Ovary (tissue), 10 donors: ENCODE measurements at regions of chrX and their contacts with region 1.

Region 1: GRCh38 chrX:108160309-108160708 is 68.7 kb downstream of the ATG4A start:
- DNase-seq: no peak
- H3K4me3 ChIP-seq: no peak overlapping the region
- H3K27ac ChIP-seq: no peak overlapping the region
- H3K4me1 ChIP-seq: no peaks in the 10 kb centered on the region
- H3K27me3 ChIP-seq: no peaks in the 10 kb centered on the region
- CTCF ChIP-seq: no peak
- EP300 ChIP-seq: no peak
- POLR2A ChIP-seq: no peak

Region 2: DNA sequence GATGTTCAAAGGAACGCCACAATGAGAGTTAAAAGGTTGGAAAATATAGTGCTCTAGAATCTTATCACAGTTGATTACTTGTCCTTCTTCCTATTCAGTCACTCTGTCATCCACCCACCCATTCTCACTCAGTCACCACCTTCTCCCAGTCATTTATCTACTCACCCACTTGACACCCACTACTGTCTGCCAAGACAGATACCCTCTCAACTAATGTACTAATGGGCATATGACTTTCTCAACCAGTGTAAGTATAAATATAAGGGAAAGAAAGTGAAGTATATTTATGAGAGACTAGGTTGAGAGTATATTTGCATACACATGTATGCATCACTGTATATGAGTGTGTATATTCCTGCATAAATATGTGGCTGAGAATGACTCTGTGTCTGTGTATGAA is 314.7 kb before region 1 on chrX:
- intact Hi-C with region 1: no loop called
- DNase-seq: no peak
- H3K4me3 ChIP-seq: no peak overlapping the region
- H3K27ac ChIP-seq: no peak overlapping the region
- H3K4me1 ChIP-seq: peaks cover 1% of the 10 kb centered on the region
- H3K27me3 ChIP-seq: no peaks in the 10 kb centered on the region
- CTCF ChIP-seq: no peak
- EP300 ChIP-seq: no peak
- POLR2A ChIP-seq: no peak

Region 3: GRCh38 chrX:108186811-108187210 is 26.5 kb after region 1 on chrX:
- intact Hi-C with region 1: loop called in 1 of 4 experiments (anchors 1 kb)
- DNase-seq: no peak
- H3K4me3 ChIP-seq: no peak overlapping the region
- H3K27ac ChIP-seq: no peak overlapping the region
- H3K4me1 ChIP-seq: no peaks in the 10 kb centered on the region
- H3K27me3 ChIP-seq: no peaks in the 10 kb centered on the region
- CTCF ChIP-seq: no peak
- EP300 ChIP-seq: no peak
- POLR2A ChIP-seq: no peak